B cell (primary cell): ENCODE measurements at regions of chr12 and their contacts with region 1.

Region 1: DNA sequence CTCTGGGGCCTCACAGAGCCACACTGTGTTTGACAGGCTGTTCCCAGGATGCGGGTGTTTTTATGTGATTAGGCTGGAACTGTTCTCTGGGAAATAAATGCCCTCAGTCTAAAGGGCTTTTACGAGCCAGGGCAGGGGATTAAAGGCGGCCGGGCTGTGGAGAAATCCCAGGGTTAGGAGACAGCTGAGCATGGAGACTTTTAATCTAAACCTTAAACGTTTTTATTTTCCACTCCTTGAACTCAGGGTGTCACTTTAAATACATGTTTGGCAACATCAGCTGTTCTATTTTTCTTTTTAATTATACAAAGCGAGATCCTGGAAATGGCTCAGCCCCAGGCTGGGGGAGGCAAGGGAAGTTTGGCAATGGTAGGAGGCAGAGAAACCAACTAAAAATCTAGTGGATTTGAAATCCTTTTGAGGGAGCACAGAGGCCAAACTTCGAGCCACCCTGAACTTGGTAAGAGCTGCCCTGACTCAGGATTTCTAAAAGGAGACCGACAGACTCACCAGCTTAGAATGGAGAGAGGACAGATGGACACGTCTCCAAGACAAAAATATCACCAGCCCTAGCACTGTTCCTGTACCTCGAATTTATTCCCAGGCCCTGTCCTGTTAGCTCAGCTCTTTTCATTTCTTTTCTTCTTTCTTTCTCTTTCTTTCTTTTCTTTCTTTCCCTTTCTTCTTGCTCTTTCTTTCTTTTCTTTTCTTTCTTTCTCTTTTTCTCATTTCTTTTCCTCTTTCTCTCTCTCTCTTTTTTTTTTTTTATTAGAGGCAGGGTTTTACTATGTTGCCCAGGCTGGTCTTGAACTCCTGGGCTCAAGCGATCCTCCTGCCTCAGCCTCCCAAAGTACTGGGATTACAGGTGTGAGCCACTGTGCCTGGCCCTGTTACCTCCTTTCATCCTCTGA is 15.8 kb upstream of the ORAI1 start:
- DNase-seq: no peak
- ATAC-seq: no peak
- H3K4me3 ChIP-seq: no peak overlapping the region
- H3K4me3 Mint-ChIP-seq: no peak overlapping the region
- H3K27ac ChIP-seq: no peak overlapping the region
- H3K27ac Mint-ChIP-seq: no peak overlapping the region
- H3K4me1 ChIP-seq: peaks cover 0 to 5% of the 10 kb centered on the region in 2 donors
- H3K4me1 Mint-ChIP-seq: peaks cover 3% of the 10 kb centered on the region
- H3K27me3 ChIP-seq: no peaks in the 10 kb centered on the region
- H3K27me3 Mint-ChIP-seq: no peaks in the 10 kb centered on the region
- CTCF ChIP-seq: no peak

Region 2: DNA sequence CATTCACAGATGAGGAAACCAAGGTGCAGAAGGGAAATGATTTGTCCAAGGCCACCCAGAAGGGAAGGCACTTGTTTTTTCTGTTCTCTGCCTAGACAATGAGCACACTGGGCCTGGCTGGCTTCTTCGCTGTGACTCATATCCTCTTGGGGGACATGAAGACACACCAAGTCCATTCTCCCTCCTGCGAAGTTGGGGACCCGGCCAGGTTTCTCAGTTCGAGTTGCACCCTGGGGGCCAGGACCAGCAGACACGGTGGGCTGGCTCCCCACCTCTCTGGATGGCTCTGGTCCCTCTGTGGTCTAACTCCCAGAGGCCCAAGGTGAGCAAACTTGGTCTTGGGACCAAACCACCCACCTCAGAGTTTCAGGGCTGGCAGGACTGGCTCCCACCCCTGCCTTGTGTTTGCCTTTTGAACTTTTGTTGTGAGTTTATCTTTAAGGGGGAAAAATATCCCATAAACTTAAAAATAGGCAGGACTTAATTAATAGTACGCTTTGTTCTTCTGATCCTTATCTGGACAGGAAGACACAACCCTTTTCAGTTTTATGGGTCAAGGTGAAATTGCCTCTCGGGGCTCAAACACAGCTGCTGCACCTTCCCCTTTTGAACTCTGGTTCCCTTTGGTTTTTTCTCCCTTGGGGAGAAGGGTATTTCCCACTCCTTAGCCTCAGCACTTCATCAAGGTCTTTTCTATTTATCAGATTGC is 932.6 kb before region 1 on chr12:
- CTCF ChIA-PET with region 1: no interaction called
- POLR2A ChIA-PET with region 1: interaction called, 10 read pairs
- intact Hi-C with region 1: no loop called
- DNase-seq: peak; percentile 62
- ATAC-seq: peak; percentile 53
- H3K4me3 ChIP-seq: no peak overlapping the region
- H3K4me3 Mint-ChIP-seq: peak overlapping the region; percentile 71
- H3K27ac ChIP-seq: peak overlapping the region in 1 of 2 donors; percentile 45
- H3K27ac Mint-ChIP-seq: peak overlapping the region; percentile 81
- H3K4me1 ChIP-seq: peaks cover 44 to 58% of the 10 kb centered on the region in 2 donors
- H3K4me1 Mint-ChIP-seq: peaks cover 44% of the 10 kb centered on the region
- H3K27me3 ChIP-seq: no peaks in the 10 kb centered on the region
- H3K27me3 Mint-ChIP-seq: no peaks in the 10 kb centered on the region
- CTCF ChIP-seq: no peak

Region 3: DNA sequence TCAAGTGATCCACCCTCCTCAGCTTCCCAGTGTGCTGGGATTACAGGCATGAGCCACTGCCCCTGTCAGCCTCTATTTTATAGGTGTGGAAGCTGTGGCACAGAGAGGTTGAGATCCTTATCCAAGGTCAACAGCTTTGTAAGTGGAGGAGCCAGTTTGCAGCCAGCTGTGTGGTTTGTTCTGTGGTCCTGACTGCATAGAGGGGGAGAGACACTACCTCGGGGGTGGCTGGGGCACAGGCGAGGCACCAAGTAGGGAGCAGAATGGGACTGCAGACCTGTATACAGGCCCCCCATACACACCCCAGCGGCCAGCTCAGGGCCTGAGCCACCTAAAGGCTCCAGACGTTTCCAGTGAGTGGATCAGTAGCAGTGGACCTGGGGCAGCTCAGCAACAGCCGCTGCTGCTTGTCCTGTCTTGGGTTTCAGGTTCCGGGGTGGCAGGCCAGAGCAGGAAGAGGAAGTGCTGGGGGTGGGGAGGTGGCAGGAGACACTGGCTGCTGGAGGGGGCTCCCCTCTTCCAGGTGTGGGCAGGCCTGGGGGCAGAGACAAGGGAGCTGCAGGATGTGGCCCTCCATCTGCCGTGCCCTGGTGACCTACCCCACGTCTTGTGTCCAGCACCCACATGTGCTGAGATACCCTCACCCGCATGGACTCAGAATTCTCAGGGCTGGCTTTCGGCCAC is 26.9 kb after region 1 on chr12:
- CTCF ChIA-PET with region 1: no interaction called
- POLR2A ChIA-PET with region 1: no interaction called
- intact Hi-C with region 1: no loop called
- DNase-seq: peak; percentile 79
- ATAC-seq: peak; percentile 90
- H3K4me3 ChIP-seq: peak overlapping the region in 4 of 5 experiments; percentile 19 to 46 (median 37)
- H3K4me3 Mint-ChIP-seq: peak overlapping the region; percentile 67
- H3K27ac ChIP-seq: peak overlapping the region; percentile 86 to 89
- H3K27ac Mint-ChIP-seq: peak overlapping the region; percentile 92
- H3K4me1 ChIP-seq: peaks cover 29 to 40% of the 10 kb centered on the region in 2 donors
- H3K4me1 Mint-ChIP-seq: peaks cover 40% of the 10 kb centered on the region
- H3K27me3 ChIP-seq: no peaks in the 10 kb centered on the region
- H3K27me3 Mint-ChIP-seq: no peaks in the 10 kb centered on the region
- CTCF ChIP-seq: no peak